ENCODE measurements at regions of chr10 and their contacts with region 1.

Region 1: DNA sequence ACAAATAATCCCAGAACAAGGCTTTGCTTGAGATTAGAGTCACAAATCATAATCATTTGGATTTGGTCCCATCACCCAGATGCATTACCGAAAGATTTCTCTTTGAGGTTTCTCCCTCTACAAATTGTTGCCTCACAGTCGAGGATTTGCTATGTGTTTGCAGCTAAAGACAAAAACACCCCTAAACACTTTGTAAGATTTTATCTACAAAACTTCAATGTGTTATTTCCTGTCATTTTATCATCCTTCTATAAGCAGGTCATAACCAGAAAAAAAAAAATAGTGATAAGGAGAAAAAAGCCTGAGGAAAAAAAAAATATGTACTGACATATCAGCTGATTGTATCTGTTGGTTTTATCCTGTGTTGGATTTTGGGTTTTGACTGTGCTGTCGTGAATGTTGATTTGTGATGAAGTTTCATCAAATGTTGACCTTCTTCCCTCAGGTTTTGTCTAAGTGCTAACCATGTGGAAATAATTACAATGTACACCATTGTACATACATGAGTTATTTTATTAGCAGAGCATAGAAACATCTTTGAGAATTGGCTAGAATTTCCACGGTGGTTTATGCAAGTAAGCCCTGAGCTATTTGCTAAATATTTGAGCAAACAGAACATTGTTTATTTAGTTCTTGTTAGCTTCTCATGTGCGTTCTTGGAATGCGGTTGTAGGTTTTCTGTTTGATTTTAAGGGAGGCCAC is 274.4 kb downstream of the NEBL start:
- DNase-seq: peak in 1 of 2 donors; percentile 11
- ATAC-seq: peak; percentile 75 to 83 (median 81)
- H3K4me3 ChIP-seq: no peak overlapping the region
- H3K4me3 Mint-ChIP-seq: no peak overlapping the region
- H3K27ac ChIP-seq: peak overlapping the region; percentile 72
- H3K27ac Mint-ChIP-seq: no peak overlapping the region
- H3K4me1 ChIP-seq: peaks cover 15% of the 10 kb centered on the region
- H3K4me1 Mint-ChIP-seq: peaks cover 18 to 19% of the 10 kb centered on the region in 2 donors
- H3K27me3 ChIP-seq: no peaks in the 10 kb centered on the region
- H3K27me3 Mint-ChIP-seq: no peaks in the 10 kb centered on the region
- CTCF ChIP-seq: no peak

Region 2: DNA sequence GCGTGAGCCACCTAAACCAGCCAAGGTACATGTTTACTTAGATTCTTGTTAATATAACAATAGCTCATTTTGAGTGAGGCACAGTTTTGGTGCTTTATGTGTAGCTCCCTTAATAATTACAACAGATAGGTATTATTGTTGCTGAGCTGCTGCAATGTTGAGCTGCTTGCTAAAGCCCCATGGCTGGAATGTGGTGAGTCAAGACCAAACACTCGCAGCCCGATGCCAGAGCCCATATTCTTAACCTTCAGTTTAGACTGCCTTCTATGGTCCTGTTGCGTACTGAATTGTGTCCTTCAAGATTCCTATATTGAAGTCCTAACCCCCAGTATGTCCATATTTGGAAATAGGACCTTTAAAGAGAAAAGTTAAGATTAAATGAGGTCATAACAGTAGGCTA is 132.7 kb before region 1 on chr10:
- intact Hi-C with region 1: no loop called
- DNase-seq: no peak
- ATAC-seq: no peak
- H3K4me3 ChIP-seq: no peak overlapping the region
- H3K4me3 Mint-ChIP-seq: no peak overlapping the region
- H3K27ac ChIP-seq: no peak overlapping the region
- H3K27ac Mint-ChIP-seq: no peak overlapping the region
- H3K4me1 ChIP-seq: no peaks in the 10 kb centered on the region
- H3K4me1 Mint-ChIP-seq: peaks cover 16 to 17% of the 10 kb centered on the region in 2 donors
- H3K27me3 ChIP-seq: no peaks in the 10 kb centered on the region
- H3K27me3 Mint-ChIP-seq: no peaks in the 10 kb centered on the region
- CTCF ChIP-seq: no peak

Region 3: GRCh38 chr10:20596911-20597310 is 25.8 kb before region 1 on chr10:
- intact Hi-C with region 1: loop called (anchors 1 kb)
- DNase-seq: no peak
- ATAC-seq: no peak
- H3K4me3 ChIP-seq: no peak overlapping the region
- H3K4me3 Mint-ChIP-seq: no peak overlapping the region
- H3K27ac ChIP-seq: no peak overlapping the region
- H3K27ac Mint-ChIP-seq: peak overlapping the region; percentile 86 to 89
- H3K4me1 ChIP-seq: peaks cover 8% of the 10 kb centered on the region
- H3K4me1 Mint-ChIP-seq: peaks cover 23 to 41% of the 10 kb centered on the region in 2 donors
- H3K27me3 ChIP-seq: no peaks in the 10 kb centered on the region
- H3K27me3 Mint-ChIP-seq: no peaks in the 10 kb centered on the region
- CTCF ChIP-seq: no peak

Region 4: DNA sequence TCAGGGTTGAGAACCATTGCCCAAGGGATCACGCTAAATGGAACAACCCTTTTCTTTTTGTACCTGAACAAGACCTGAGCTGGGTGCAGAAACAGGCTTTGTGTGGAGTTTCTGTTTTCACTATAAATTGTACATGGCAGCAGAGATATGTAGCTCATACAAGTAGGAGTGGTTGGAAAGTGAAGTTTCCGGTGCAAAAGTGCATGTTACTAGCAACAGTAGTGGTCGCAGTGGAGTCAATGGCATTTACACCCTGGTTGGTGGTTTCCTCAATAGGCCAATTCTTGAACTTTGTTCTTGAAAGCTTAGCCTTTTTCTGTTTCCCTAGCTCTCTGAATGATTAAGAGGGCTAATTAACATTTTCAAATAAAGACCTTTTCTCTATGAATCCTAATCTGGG is 103.7 kb after region 1 on chr10:
- intact Hi-C with region 1: loop called (anchors 2 kb)
- DNase-seq: peak; percentile 6 to 45
- ATAC-seq: peak; percentile 86 to 99 (median 91)
- H3K4me3 ChIP-seq: no peak overlapping the region
- H3K4me3 Mint-ChIP-seq: peak overlapping the region; percentile 68
- H3K27ac ChIP-seq: no peak overlapping the region
- H3K27ac Mint-ChIP-seq: peak overlapping the region; percentile 56 to 64
- H3K4me1 ChIP-seq: peaks cover 12% of the 10 kb centered on the region
- H3K4me1 Mint-ChIP-seq: peaks cover 35 to 45% of the 10 kb centered on the region in 2 donors
- H3K27me3 ChIP-seq: no peaks in the 10 kb centered on the region
- H3K27me3 Mint-ChIP-seq: no peaks in the 10 kb centered on the region
- CTCF ChIP-seq: no peak